Common myeloid progenitor, CD34-positive (primary cell): ENCODE measurements at regions of chr11 and their contacts with region 1.

Region 1: GRCh38 chr11:120229451-120230424 is 10.2 kb upstream of the POU2F3 start:
- DNase-seq: peak; percentile 54 to 69 (median 67)
- H3K4me3 ChIP-seq: no peak overlapping the region
- H3K27ac ChIP-seq: no peak overlapping the region
- H3K4me1 ChIP-seq: peaks cover 3 to 42% (median 26%) of the 10 kb centered on the region in 4 experiments
- H3K27me3 ChIP-seq: peaks cover 0 to 14% (median 5%) of the 10 kb centered on the region in 5 experiments

Region 2: GRCh38 chr11:120180551-120181232 is 49.0 kb before region 1 on chr11:
- CTCF ChIA-PET with region 1: interaction called, 326 read pairs
- POLR2A ChIA-PET with region 1: no interaction called
- DNase-seq: peak in 2 of 3 donors; percentile 14 to 29
- H3K4me3 ChIP-seq: no peak overlapping the region
- H3K27ac ChIP-seq: no peak overlapping the region
- H3K4me1 ChIP-seq: peaks cover 0 to 16% (median 2%) of the 10 kb centered on the region in 4 experiments
- H3K27me3 ChIP-seq: peaks cover 0 to 3% (median 0%) of the 10 kb centered on the region in 5 experiments

Region 3: DNA sequence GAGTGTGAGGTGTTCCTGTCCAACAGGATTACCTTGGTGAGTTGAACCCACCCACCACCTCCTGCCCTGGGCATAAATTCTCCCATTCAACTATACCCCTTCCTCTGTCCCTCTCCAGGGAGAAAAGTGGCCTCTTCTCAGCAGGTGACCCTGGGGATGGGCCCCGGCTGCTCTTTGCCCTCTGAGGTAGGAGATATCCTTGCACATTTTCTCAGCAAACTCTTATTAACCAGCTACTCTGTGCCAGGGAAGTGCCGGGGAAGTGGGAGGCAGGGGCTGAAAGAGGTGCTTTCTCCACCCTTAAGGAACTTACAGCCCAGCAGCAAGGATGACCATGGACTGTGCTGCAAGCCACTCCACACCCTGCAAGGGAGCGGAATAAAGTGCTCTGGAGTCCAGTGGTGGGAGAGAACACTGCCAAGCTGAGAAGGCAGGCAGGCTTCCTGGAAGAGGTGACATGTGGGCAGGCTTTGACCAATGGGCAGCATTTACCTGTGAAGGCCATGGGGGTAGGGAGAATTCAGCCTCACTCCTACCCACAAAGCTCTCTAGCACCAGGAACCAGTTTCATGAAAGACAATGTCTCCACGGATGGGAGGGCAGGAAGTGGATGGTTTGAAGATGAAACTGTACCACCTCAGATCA is 40.8 kb before region 1 on chr11:
- CTCF ChIA-PET with region 1: interaction called, 17 read pairs
- POLR2A ChIA-PET with region 1: interaction called, 3 read pairs
- DNase-seq: no peak
- H3K4me3 ChIP-seq: no peak overlapping the region
- H3K27ac ChIP-seq: no peak overlapping the region
- H3K4me1 ChIP-seq: peaks cover 0 to 3% (median 0%) of the 10 kb centered on the region in 4 experiments
- H3K27me3 ChIP-seq: no peaks in the 10 kb centered on the region

Region 4: GRCh38 chr11:120210626-120211521 is 18.9 kb before region 1 on chr11 and contains the start of gene OAF:
- CTCF ChIA-PET with region 1: interaction called, 182 read pairs
- POLR2A ChIA-PET with region 1: interaction called, 3 read pairs
- DNase-seq: peak; percentile 85 to 95 (median 94)
- H3K4me3 ChIP-seq: peak within 1 kb of the TSS; percentile 48 to 90 (median 85)
- H3K27ac ChIP-seq: peak within 1 kb of the TSS in 1 of 2 experiments; percentile 58
- H3K4me1 ChIP-seq: peaks cover 4 to 49% (median 37%) of the 10 kb centered on the region in 4 experiments
- H3K27me3 ChIP-seq: no peaks in the 10 kb centered on the region

Region 5: DNA sequence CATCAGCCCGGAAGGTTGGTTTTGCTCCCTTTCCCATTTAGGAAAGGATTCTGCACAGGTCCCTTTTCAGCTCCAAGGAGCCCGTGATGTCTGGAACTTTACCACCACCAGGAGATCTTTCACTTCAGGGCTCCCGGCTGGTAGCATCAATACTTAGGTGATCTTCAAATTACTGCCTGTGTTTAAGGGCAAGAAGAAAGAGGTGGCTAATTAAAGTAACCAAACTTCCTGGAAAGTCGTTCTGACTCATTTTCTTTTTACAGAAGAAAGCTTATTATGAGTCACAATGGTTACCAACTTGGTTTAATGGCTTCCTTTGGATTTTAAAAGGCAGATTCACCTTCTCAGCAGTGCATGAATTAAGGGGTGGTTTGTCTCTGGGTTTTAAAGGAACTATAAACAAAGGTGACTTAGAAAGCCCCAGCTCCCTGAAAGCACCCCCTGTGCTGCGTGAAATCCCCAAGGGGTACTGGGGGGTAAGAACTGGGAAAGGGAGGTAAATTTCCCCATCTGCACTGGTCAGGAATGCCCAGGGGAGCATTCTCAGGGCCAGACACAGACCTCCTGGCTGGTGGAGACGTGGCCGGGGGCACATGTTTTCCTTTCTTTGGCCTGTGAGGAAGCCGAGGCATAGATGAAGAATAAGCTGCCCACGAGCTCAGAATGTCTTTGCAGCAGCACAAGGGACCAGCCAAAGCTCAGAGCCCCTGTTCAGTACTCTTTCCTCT is 19.0 kb after region 1 on chr11:
- CTCF ChIA-PET with region 1: interaction called, 64 read pairs
- POLR2A ChIA-PET with region 1: no interaction called
- DNase-seq: peak in 2 of 3 donors; percentile 49 to 53
- H3K4me3 ChIP-seq: no peak overlapping the region
- H3K27ac ChIP-seq: no peak overlapping the region
- H3K4me1 ChIP-seq: peaks cover 0 to 3% (median under 1%) of the 10 kb centered on the region in 4 experiments
- H3K27me3 ChIP-seq: peaks cover 0 to 82% (median 10%) of the 10 kb centered on the region in 5 experiments

Region 6: DNA sequence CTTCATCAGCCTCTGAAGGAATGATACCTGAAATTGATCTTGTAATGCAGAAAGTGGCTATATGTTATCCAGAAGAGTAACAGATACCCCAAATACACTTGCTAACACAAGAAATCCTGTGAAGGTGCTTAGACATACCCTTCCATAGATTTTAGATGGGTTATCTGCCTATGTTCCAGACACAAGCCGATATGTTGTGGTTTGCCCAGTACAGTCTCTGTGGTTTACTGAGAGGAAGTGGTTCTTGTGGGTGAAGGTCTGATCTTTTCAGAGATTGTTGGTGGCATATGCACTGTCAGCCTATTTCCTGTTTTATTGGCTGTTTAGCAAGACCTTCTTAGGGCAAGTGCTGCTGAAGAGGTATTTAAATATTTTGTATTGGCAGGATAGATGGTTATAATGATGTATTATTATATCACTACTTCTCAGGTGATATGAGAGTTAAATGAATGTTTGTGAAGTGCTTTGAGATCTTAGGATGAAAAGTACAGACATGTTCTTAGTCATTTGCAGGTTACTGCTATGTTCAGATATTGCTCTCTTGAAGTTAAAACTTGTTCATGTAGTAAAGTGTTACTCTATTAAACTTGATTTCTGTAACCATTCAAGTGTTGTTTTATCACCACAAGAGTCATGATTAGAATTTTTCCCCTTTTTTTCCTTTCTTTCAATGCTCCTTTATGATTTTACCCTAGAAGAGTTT is 114.7 kb after region 1 on chr11:
- CTCF ChIA-PET with region 1: no interaction called
- POLR2A ChIA-PET with region 1: no interaction called
- DNase-seq: peak; percentile 91 to 96 (median 94)
- H3K4me3 ChIP-seq: peak overlapping the region in 2 of 7 experiments; percentile 36 to 53
- H3K27ac ChIP-seq: no peak overlapping the region
- H3K4me1 ChIP-seq: peaks cover 11 to 23% (median 14%) of the 10 kb centered on the region in 4 experiments
- H3K27me3 ChIP-seq: peaks cover 15 to 75% (median 36%) of the 10 kb centered on the region in 5 experiments